ENCODE measurements at regions of chr11 and their contacts with region 1.

Region 1: DNA sequence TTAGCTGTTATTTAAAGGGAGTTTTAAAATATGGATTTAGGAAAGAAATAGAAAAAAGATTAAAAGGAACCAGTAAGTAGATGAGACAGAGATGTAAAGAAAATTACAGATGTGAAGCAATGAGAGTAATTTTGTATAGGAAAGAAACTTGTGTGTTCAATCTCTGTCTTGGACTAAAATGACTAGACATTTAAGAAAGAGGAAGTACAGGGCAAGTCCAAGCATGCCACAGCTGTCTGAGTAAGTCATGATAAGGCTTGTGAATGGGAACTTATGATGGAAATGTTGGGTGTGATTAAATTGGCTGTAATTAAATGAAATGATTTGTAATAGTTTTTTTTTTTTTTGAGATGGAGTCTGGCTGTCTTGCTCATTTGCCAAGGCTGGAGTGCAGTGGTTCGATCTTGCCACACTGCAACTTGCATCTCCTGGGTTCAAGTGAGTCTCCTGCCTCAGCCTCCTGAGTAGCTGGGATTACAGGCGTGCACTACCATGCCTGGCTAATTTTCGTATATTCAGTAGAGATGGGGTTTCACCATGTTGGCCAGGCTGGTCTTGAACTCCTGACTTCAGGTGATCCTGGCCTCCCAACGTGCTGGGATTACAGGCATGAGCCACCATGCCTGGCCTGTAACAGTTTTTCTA is 5.9 kb upstream of the ACY3 start:
- DNase-seq: no peak
- H3K4me3 ChIP-seq: no peak overlapping the region
- H3K4me3 Mint-ChIP-seq: no peak overlapping the region
- H3K27ac ChIP-seq: no peak overlapping the region
- H3K27ac Mint-ChIP-seq: no peak overlapping the region
- H3K4me1 ChIP-seq: peaks cover 6% of the 10 kb centered on the region
- H3K4me1 Mint-ChIP-seq: peaks cover 0 to 10% (median 4%) of the 10 kb centered on the region in 4 donors
- H3K27me3 ChIP-seq: no peaks in the 10 kb centered on the region
- H3K27me3 Mint-ChIP-seq: no peaks in the 10 kb centered on the region

Region 2: DNA sequence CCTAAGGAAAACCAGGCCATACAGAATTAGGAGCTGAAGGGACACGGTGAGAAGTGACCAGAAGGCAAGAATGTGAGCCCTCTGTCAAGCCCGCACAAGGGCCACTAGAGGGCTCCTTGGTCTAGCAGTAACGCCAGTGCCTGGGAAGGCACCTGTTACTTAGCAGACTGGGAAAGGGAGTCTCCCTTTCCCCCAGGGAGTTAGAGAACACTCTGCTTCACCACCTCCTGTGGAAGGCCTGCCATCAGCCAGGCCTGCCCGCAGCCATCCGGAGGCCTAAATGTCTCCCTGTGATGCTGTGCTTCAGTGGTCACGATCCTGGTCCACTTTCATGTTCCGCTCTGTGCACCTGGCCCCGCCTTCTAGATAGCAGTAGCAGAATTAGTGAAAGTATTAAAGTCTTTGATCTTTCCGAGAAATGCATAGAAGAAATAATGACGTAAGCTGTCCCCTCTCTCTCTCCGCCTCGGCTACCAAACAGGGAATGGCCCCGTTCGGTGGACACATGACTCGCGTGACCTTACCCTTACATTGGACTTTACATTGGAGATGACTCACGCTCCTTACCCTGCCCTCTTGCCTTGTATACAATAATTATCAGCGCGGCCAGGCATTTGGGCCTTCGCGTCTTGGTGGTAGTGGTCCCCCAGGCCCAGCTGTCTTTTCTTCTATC is 83.5 kb before region 1 on chr11:
- CTCF ChIA-PET with region 1: interaction called, 4 read pairs
- POLR2A ChIA-PET with region 1: no interaction called
- intact Hi-C with region 1: loop called (anchors 1 kb)
- DNase-seq: peak in 2 of 5 donors; percentile 23 to 25
- H3K4me3 ChIP-seq: no peak overlapping the region
- H3K4me3 Mint-ChIP-seq: peak overlapping the region in 1 of 8 donors; percentile 42
- H3K27ac ChIP-seq: no peak overlapping the region
- H3K27ac Mint-ChIP-seq: no peak overlapping the region
- H3K4me1 ChIP-seq: no peaks in the 10 kb centered on the region
- H3K4me1 Mint-ChIP-seq: no peaks in the 10 kb centered on the region
- H3K27me3 ChIP-seq: no peaks in the 10 kb centered on the region
- H3K27me3 Mint-ChIP-seq: peaks cover 14 to 18% of the 10 kb centered on the region in 2 donors

Region 3: GRCh38 chr11:67613960-67614715 is 42.3 kb before region 1 on chr11:
- CTCF ChIA-PET with region 1: interaction called, 9 read pairs
- POLR2A ChIA-PET with region 1: interaction called, 7 read pairs
- intact Hi-C with region 1: loop called (anchors 1 kb)
- DNase-seq: peak; percentile 84 to 94 (median 88)
- H3K4me3 ChIP-seq: peak overlapping the region; percentile 57 to 59
- H3K4me3 Mint-ChIP-seq: peak overlapping the region; percentile 80 to 88 (median 85)
- H3K27ac ChIP-seq: peak overlapping the region; percentile 94
- H3K27ac Mint-ChIP-seq: peak overlapping the region; percentile 97 to 99 (median 98)
- H3K4me1 ChIP-seq: peaks cover 33% of the 10 kb centered on the region
- H3K4me1 Mint-ChIP-seq: peaks cover 13 to 37% (median 20%) of the 10 kb centered on the region in 4 donors
- H3K27me3 ChIP-seq: no peaks in the 10 kb centered on the region
- H3K27me3 Mint-ChIP-seq: peaks cover 0 to 2% of the 10 kb centered on the region in 2 donors

Region 4: DNA sequence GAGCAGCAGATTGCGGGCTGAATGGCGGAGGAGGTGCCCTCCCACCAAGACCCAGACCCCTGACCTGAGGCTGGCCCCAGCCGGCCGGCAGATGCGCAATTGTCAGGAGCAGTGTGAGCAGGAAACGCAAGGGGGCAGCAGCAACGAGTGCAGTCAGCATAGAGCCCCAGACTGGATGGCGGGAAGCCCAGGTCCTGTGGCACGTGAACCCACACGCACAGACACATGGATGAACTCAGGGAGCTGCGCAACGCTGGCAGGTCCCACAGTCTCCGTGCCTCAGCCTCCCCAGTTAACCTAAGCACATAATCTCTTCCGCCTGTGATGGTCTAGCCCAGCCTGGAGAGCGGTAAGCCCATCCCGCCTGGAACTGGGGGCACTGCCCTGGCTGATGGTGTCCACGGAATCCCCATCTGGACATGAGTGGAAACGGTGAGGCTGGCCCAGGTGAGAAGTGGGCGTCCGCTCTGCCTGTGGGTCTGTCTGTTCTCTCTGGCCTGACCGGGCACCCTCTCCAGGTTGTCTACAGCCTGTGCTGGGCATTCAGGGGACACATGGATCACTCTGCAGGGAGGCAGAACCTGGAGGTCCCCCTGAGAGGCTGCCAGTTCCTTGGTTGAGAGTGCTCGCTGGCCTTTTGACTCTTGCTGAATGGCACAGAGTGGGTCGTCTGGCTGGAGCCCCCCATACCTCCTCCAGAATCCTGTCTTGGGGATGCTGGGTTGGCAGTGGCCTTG is 16.2 kb before region 1 on chr11:
- CTCF ChIA-PET with region 1: interaction called, 19 read pairs
- POLR2A ChIA-PET with region 1: no interaction called
- intact Hi-C with region 1: loop called (anchors 1 kb)
- DNase-seq: peak in 4 of 5 donors; percentile 49 to 56 (median 51)
- H3K4me3 ChIP-seq: no peak overlapping the region
- H3K4me3 Mint-ChIP-seq: no peak overlapping the region
- H3K27ac ChIP-seq: no peak overlapping the region
- H3K27ac Mint-ChIP-seq: peak overlapping the region in 1 of 7 donors; percentile 9
- H3K4me1 ChIP-seq: no peaks in the 10 kb centered on the region
- H3K4me1 Mint-ChIP-seq: peaks cover 0 to 5% (median under 1%) of the 10 kb centered on the region in 4 donors
- H3K27me3 ChIP-seq: no peaks in the 10 kb centered on the region
- H3K27me3 Mint-ChIP-seq: no peaks in the 10 kb centered on the region

Region 5: GRCh38 chr11:67996051-67996450 is 339.7 kb after region 1 on chr11:
- CTCF ChIA-PET with region 1: no interaction called
- POLR2A ChIA-PET with region 1: no interaction called
- intact Hi-C with region 1: no loop called
- DNase-seq: no peak
- H3K4me3 ChIP-seq: no peak overlapping the region
- H3K4me3 Mint-ChIP-seq: no peak overlapping the region
- H3K27ac ChIP-seq: no peak overlapping the region
- H3K27ac Mint-ChIP-seq: no peak overlapping the region
- H3K4me1 ChIP-seq: peaks cover 16% of the 10 kb centered on the region
- H3K4me1 Mint-ChIP-seq: peaks cover 17 to 38% (median 22%) of the 10 kb centered on the region in 4 donors
- H3K27me3 ChIP-seq: no peaks in the 10 kb centered on the region
- H3K27me3 Mint-ChIP-seq: no peaks in the 10 kb centered on the region

Measured in CD4-positive, alpha-beta memory T cell (primary cell).